HEK293 (cell line): ENCODE measurements at regions of chr6 and their contacts with region 1.

Region 1: DNA sequence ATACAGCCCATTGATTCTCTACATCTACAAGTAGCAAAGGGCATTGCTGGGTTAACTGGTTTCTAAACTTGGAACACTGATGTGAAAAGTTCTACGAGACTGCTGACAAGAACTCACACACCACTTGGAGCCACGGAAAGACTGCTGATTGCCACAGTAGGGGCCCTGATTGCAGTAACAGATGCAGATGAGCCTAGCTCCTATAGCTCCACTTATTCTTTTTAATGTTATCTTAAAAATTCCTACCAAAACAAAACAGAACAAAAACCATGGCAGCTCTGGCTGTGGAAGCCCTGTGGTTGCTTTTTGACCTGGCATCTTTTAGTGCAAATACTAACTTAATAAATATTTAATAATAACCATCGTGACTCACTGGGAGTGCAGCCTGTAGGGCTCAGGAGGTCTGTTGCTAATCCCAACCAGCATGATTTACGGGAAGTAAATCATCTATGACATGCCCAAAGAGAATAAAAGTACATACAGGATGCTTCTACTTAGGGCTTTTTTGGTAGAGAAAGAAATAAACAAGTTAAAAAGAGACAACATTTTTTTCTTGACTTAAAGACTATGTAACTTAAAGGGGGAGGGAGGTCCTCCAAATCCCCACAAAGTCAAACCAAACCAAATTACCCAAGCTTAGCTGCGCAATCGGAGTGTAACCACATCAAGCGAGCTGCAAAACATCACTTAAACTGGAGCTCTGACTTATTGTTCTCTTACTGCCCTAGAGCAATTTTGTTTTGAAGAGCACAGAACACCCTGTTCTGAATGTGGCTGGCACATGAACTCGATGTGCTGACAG is 87.2 kb downstream of the FKBP5 start:
- H3K4me3 ChIP-seq: no peak overlapping the region
- H3K27ac ChIP-seq: no peak overlapping the region
- H3K4me1 ChIP-seq: peaks cover 35% of the 10 kb centered on the region
- CTCF ChIP-seq: no peak

Region 2: GRCh38 chr6:35327349-35328027 is 274.0 kb before region 1 on chr6:
- CTCF ChIA-PET with region 1: no interaction called
- POLR2A ChIA-PET with region 1: no interaction called
- H3K4me3 ChIP-seq: no peak overlapping the region
- H3K27ac ChIP-seq: no peak overlapping the region
- H3K4me1 ChIP-seq: no peaks in the 10 kb centered on the region
- CTCF ChIP-seq: peak; percentile 46

Region 3: GRCh38 chr6:35562053-35562452 is 39.5 kb before region 1 on chr6:
- CTCF ChIA-PET with region 1: no interaction called
- POLR2A ChIA-PET with region 1: no interaction called
- H3K4me3 ChIP-seq: no peak overlapping the region
- H3K27ac ChIP-seq: no peak overlapping the region
- H3K4me1 ChIP-seq: peaks cover 10% of the 10 kb centered on the region; the same call in 1 of the 2 replicates
- CTCF ChIP-seq: no peak

Region 4: DNA sequence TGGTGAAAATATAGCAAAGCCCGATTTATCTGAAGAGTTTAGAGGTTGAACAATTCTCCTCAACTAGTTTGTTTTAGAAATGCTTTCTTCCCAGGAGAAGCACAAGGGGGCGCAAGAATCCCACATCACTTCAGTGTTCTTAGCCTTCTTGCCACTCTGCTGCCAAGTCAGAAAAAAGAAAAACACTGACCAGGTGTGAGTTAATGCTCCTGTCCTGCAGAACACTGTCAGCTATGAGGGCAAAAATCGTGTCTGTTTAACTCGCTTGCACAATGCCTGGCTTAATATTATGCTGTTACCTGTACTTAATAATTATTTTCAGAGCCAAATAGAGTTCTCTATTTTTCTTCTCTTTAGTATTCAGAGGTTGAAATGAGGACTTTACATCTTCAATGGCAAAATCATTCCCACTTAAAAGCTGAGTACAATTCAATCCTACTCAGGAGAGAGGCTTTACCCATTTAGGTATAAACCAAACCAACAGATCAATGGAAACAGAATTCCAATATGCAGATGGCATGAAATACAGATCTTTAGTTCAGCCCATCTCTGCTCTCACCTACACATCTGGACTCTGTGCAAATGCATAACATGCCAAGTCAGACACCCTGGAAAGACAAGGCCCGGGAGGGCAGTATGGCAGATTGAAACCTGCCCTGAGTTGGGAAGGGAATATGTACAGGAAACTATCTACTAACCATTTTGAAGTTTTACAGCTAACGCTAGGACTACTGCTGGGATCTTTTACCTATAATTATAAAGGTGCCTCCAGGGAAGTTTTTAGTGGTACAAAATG is 17.4 kb before region 1 on chr6:
- CTCF ChIA-PET with region 1: interaction called, 36 read pairs
- POLR2A ChIA-PET with region 1: no interaction called
- H3K4me3 ChIP-seq: no peak overlapping the region
- H3K27ac ChIP-seq: no peak overlapping the region
- H3K4me1 ChIP-seq: no peaks in the 10 kb centered on the region
- CTCF ChIP-seq: peak; percentile 69; the same call in 1 of the 2 replicates

Region 5: GRCh38 chr6:35651244-35651643 is 49.7 kb after region 1 on chr6:
- CTCF ChIA-PET with region 1: no interaction called
- POLR2A ChIA-PET with region 1: no interaction called
- H3K4me3 ChIP-seq: no peak overlapping the region
- H3K27ac ChIP-seq: no peak overlapping the region
- H3K4me1 ChIP-seq: no peaks in the 10 kb centered on the region; the same call in 1 of the 2 replicates
- CTCF ChIP-seq: no peak

Region 6: DNA sequence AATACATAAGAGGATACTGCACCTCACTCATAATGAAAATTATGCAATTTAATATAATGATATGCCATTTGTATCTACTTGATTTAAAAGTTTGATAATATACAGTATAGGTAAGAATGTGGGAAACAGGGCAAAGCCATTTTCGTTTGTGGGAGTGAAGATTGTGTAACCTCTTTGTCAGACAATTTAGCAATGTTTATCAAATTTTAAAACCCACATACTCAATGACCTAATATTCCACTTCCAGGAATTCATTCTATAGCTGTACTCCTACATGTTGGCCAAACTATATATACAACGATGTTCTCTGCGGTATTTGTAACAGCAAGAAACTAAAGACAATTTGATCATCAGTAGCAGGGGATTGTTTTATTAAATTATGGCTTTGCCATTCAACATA is 104.9 kb after region 1 on chr6:
- CTCF ChIA-PET with region 1: no interaction called
- POLR2A ChIA-PET with region 1: interaction called, 10 read pairs
- H3K4me3 ChIP-seq: no peak overlapping the region
- H3K27ac ChIP-seq: no peak overlapping the region
- H3K4me1 ChIP-seq: no peaks in the 10 kb centered on the region
- CTCF ChIP-seq: no peak